ENCODE measurements at regions of chr17 and their contacts with region 1.

Region 1: DNA sequence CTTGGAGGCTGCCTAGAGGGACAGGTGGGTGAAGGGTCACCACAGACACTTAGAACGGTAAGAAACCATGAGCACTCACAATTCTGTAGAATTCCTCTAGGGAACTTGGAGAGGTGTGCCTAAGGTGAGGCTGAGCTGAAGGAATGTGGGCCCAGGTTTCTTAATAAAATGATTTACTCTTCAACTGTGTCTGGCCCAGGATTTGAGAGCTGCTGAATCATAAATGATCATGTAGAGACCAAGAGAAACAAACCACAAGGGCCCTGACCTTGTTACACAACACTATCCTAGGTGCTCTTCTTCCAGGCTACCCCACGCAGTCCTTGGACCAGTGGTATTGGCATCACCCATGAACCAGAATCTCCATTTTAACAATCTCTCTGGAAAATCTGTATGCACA is 27.7 kb downstream of the ZNF18 start:
- DNase-seq: no peak
- ATAC-seq: no peak
- H3K4me3 ChIP-seq: no peak overlapping the region
- H3K4me3 Mint-ChIP-seq: no peak overlapping the region
- H3K27ac ChIP-seq: no peak overlapping the region
- H3K27ac Mint-ChIP-seq: no peak overlapping the region
- H3K4me1 ChIP-seq: no peaks in the 10 kb centered on the region
- H3K4me1 Mint-ChIP-seq: peaks cover 0 to 7% (median 0%) of the 10 kb centered on the region in 7 donors
- H3K27me3 ChIP-seq: no peaks in the 10 kb centered on the region
- H3K27me3 Mint-ChIP-seq: no peaks in the 10 kb centered on the region

Region 2: DNA sequence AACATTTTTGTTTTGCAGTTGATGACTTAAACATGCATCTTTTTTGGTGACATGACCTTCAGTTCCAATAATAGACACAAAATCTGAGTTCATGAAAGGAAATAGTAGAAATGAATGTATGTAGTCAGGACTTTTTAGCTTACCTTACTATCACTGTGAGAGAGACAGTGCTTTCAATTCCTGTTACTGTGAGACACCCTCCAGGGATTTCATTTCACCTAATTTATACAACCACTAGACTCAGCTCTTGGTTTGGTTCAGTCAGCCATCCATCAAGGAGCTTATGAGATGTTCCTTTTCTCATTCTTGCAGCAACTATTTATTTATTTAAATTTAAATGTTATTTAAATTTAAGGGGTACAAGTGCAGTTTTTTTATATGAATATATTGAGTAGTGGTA is 129.0 kb after region 1 on chr17:
- CTCF ChIA-PET with region 1: no interaction called
- POLR2A ChIA-PET with region 1: no interaction called
- intact Hi-C with region 1: loop called in 1 of 2 experiments (anchors 1 kb)
- DNase-seq: no peak
- ATAC-seq: no peak
- H3K4me3 ChIP-seq: no peak overlapping the region
- H3K4me3 Mint-ChIP-seq: no peak overlapping the region
- H3K27ac ChIP-seq: no peak overlapping the region
- H3K27ac Mint-ChIP-seq: no peak overlapping the region
- H3K4me1 ChIP-seq: no peaks in the 10 kb centered on the region
- H3K4me1 Mint-ChIP-seq: peaks cover 0 to 20% (median 12%) of the 10 kb centered on the region in 7 donors
- H3K27me3 ChIP-seq: no peaks in the 10 kb centered on the region
- H3K27me3 Mint-ChIP-seq: no peaks in the 10 kb centered on the region